SK-N-SH (cell line): ENCODE measurements at regions of chr17 and their contacts with region 1.

Region 1: GRCh38 chr17:78019367-78019975 is 61.0 kb downstream of the TNRC6C start:
- DNase-seq: peak; percentile 40
- H3K4me3 ChIP-seq: no peak overlapping the region
- H3K27ac ChIP-seq: no peak overlapping the region
- H3K4me1 ChIP-seq: peaks cover 0 to 9% of the 10 kb centered on the region in 2 experiments; a peak in 2 of 4 replicates
- H3K27me3 ChIP-seq: no peaks in the 10 kb centered on the region
- CTCF ChIP-seq: peak; percentile 88
- EP300 ChIP-seq: no peak
- RAD21 ChIP-seq: peak; percentile 83

Region 2: GRCh38 chr17:77528516-77529327 is 490.7 kb before region 1 on chr17:
- CTCF ChIA-PET with region 1: interaction called, 22 read pairs
- POLR2A ChIA-PET with region 1: no interaction called
- DNase-seq: peak; percentile 95
- H3K4me3 ChIP-seq: peak overlapping the region; percentile 43 to 44; a peak in 3 of 4 replicates
- H3K27ac ChIP-seq: no peak overlapping the region
- H3K4me1 ChIP-seq: peaks cover 0 to 13% of the 10 kb centered on the region in 2 experiments; a peak in 1 of 4 replicates
- H3K27me3 ChIP-seq: peaks cover 38% of the 10 kb centered on the region; the same call in 1 of the 2 replicates
- CTCF ChIP-seq: no peak
- EP300 ChIP-seq: no peak
- RAD21 ChIP-seq: no peak

Region 3: GRCh38 chr17:78032166-78032565 is 12.7 kb after region 1 on chr17:
- CTCF ChIA-PET with region 1: interaction called, 47 read pairs
- POLR2A ChIA-PET with region 1: no interaction called
- DNase-seq: no peak
- H3K4me3 ChIP-seq: no peak overlapping the region
- H3K27ac ChIP-seq: peak overlapping the region; percentile 23 to 75; a peak in 3 of 4 replicates
- H3K4me1 ChIP-seq: peaks cover 3 to 13% of the 10 kb centered on the region in 2 experiments
- H3K27me3 ChIP-seq: no peaks in the 10 kb centered on the region
- CTCF ChIP-seq: no peak
- EP300 ChIP-seq: no peak
- RAD21 ChIP-seq: no peak

Region 4: GRCh38 chr17:78082988-78083387 is 63.5 kb after region 1 on chr17:
- CTCF ChIA-PET with region 1: interaction called, 35 read pairs
- POLR2A ChIA-PET with region 1: no interaction called
- DNase-seq: no peak
- H3K4me3 ChIP-seq: no peak overlapping the region
- H3K27ac ChIP-seq: no peak overlapping the region
- H3K4me1 ChIP-seq: no peaks in the 10 kb centered on the region
- H3K27me3 ChIP-seq: no peaks in the 10 kb centered on the region
- CTCF ChIP-seq: no peak
- EP300 ChIP-seq: no peak
- RAD21 ChIP-seq: no peak

Region 5: GRCh38 chr17:78133971-78134898 is 114.8 kb after region 1 on chr17:
- CTCF ChIA-PET with region 1: interaction called, 10 read pairs
- POLR2A ChIA-PET with region 1: no interaction called
- DNase-seq: peak; percentile 84
- H3K4me3 ChIP-seq: no peak overlapping the region
- H3K27ac ChIP-seq: no peak overlapping the region
- H3K4me1 ChIP-seq: no peaks in the 10 kb centered on the region; a peak in 1 of 4 replicates
- H3K27me3 ChIP-seq: peaks cover 3% of the 10 kb centered on the region
- CTCF ChIP-seq: peak; percentile 66
- EP300 ChIP-seq: no peak
- RAD21 ChIP-seq: peak; percentile 63

Region 6: DNA sequence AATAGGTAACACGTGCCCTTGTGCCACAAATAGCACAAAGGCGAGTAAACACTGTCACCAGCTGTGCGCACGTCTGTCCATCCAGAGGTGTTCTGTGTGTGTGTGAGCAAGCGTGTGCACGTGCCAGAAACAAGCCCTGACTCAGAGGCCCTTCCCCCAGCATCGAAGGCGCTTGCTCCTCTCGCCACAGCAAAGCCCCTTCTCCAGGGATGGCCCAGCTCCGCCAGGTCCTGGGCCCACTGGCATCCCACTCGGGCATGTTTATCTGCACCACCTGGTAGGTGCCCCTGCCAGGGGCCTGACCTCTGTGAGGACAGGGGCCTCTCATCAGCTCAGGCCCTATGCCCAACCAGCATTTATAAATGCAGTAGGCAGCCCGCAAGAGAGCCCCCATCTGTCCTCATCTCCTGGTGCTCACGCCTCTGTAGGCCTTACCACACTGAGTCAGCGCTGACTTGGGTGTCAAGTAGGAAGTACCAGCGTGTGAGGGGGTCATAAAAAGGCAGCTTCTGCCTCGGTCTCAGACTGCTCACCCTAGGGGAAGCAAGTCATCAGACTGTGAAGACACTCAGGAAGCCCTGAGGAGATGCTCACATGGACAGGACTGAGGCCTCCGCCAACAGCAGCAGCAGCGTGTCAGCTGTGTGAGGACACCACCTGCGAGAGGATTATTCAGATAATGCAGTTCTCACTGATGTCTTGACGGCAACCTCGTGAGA is 222.7 kb after region 1 on chr17:
- CTCF ChIA-PET with region 1: no interaction called
- POLR2A ChIA-PET with region 1: no interaction called
- DNase-seq: no peak
- H3K4me3 ChIP-seq: no peak overlapping the region
- H3K27ac ChIP-seq: no peak overlapping the region
- H3K4me1 ChIP-seq: peaks cover 0 to 19% of the 10 kb centered on the region in 2 experiments; a peak in 1 of 4 replicates
- H3K27me3 ChIP-seq: no peaks in the 10 kb centered on the region
- CTCF ChIP-seq: no peak
- EP300 ChIP-seq: no peak
- RAD21 ChIP-seq: no peak